MCF 10A (cell line): ENCODE measurements at regions of chr3 and their contacts with region 1.

Region 1: GRCh38 chr3:88149509-88150362 is at the start of gene C3orf38:
- DNase-seq: peak; percentile 93
- H3K4me3 Mint-ChIP-seq: peak within 1 kb of the TSS; percentile 98
- H3K27ac Mint-ChIP-seq: peak within 1 kb of the TSS; percentile 95
- H3K4me1 Mint-ChIP-seq: peaks cover 18% of the 10 kb centered on the region
- H3K27me3 Mint-ChIP-seq: no peaks in the 10 kb centered on the region
- CTCF ChIP-seq: no peak
- total RNA-seq, gene C3orf38: 21.7 and 23.4 TPM in 2 replicates

Region 2: GRCh38 chr3:88031642-88032077 is 118.1 kb before region 1 on chr3:
- CTCF ChIA-PET with region 1: no interaction called
- POLR2A ChIA-PET with region 1: interaction called, 11 read pairs
- intact Hi-C with region 1: no loop called
- DNase-seq: peak; percentile 41
- H3K4me3 Mint-ChIP-seq: peak overlapping the region; percentile 67
- H3K27ac Mint-ChIP-seq: peak overlapping the region; percentile 59
- H3K4me1 Mint-ChIP-seq: peaks cover 21% of the 10 kb centered on the region
- H3K27me3 Mint-ChIP-seq: no peaks in the 10 kb centered on the region
- CTCF ChIP-seq: no peak

Region 3: GRCh38 chr3:88131695-88132094 is 18.0 kb before region 1 on chr3:
- CTCF ChIA-PET with region 1: interaction called, 3 read pairs
- POLR2A ChIA-PET with region 1: interaction called, 25 read pairs
- intact Hi-C with region 1: no loop called
- DNase-seq: no peak
- H3K4me3 Mint-ChIP-seq: no peak overlapping the region
- H3K27ac Mint-ChIP-seq: no peak overlapping the region
- H3K4me1 Mint-ChIP-seq: peaks cover 10% of the 10 kb centered on the region
- H3K27me3 Mint-ChIP-seq: no peaks in the 10 kb centered on the region
- CTCF ChIP-seq: no peak